Gastrocnemius medialis (tissue), 4 donors: ENCODE measurements at regions of chr15 and their contacts with region 1.

Region 1: GRCh38 chr15:56931639-56932508 is 13.4 kb downstream of the TCF12 start:
- DNase-seq: no peak
- ATAC-seq: peak in 1 of 2 donors; percentile 23
- H3K4me3 ChIP-seq: no peak overlapping the region
- H3K27ac ChIP-seq: peak overlapping the region in 1 of 4 donors; percentile 15
- H3K4me1 ChIP-seq: peaks cover 47 to 74% of the 10 kb centered on the region in 2 donors
- H3K27me3 ChIP-seq: no peaks in the 10 kb centered on the region
- CTCF ChIP-seq: no peak
- POLR2A ChIP-seq: no peak

Region 2: GRCh38 chr15:56631765-56632164 is 300.1 kb before region 1 on chr15:
- in situ Hi-C with region 1: no loop called
- intact Hi-C with region 1: no loop called
- DNase-seq: no peak
- ATAC-seq: no peak
- H3K4me3 ChIP-seq: no peak overlapping the region
- H3K27ac ChIP-seq: no peak overlapping the region
- H3K4me1 ChIP-seq: no peaks in the 10 kb centered on the region
- H3K27me3 ChIP-seq: no peaks in the 10 kb centered on the region
- CTCF ChIP-seq: no peak
- POLR2A ChIP-seq: no peak

Region 3: GRCh38 chr15:56892659-56893356 is 39.1 kb before region 1 on chr15:
- in situ Hi-C with region 1: no loop called
- intact Hi-C with region 1: no loop called
- DNase-seq: no peak
- ATAC-seq: peak; percentile 19 to 51
- H3K4me3 ChIP-seq: no peak overlapping the region
- H3K27ac ChIP-seq: peak overlapping the region in 3 of 4 donors; percentile 15 to 45 (median 40)
- H3K4me1 ChIP-seq: peaks cover 17 to 22% of the 10 kb centered on the region in 2 donors
- H3K27me3 ChIP-seq: no peaks in the 10 kb centered on the region
- CTCF ChIP-seq: no peak
- POLR2A ChIP-seq: no peak

Region 4: DNA sequence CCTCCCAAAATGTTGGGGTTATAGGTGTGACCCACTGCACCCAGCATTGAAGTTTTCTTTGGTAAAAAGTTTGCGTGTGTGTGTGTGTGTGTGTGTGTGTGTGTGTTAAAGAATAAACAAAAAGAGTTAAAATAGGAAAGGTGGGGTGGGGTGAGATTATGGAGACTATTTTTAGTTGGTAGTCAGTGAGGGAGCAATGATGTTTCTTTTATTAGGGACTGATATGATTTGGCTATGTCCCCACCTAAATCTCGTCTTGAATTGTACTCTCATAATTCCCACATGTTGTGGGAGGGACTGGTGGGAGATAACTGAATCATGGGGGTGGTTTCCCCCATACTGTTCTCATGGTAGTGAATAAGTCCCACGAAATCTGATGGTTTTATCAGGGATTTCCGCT is 536.6 kb after region 1 on chr15:
- in situ Hi-C with region 1: no loop called
- intact Hi-C with region 1: loop called (anchors 5 kb)
- DNase-seq: no peak
- ATAC-seq: no peak
- H3K4me3 ChIP-seq: no peak overlapping the region
- H3K27ac ChIP-seq: no peak overlapping the region
- H3K4me1 ChIP-seq: no peaks in the 10 kb centered on the region
- H3K27me3 ChIP-seq: no peaks in the 10 kb centered on the region
- CTCF ChIP-seq: no peak
- POLR2A ChIP-seq: no peak